Activated B cell treated with CpG ODN at 0.5 μM for 24 hours (primary cell): ENCODE measurements at regions of chr2 and their contacts with region 1.

Region 1: DNA sequence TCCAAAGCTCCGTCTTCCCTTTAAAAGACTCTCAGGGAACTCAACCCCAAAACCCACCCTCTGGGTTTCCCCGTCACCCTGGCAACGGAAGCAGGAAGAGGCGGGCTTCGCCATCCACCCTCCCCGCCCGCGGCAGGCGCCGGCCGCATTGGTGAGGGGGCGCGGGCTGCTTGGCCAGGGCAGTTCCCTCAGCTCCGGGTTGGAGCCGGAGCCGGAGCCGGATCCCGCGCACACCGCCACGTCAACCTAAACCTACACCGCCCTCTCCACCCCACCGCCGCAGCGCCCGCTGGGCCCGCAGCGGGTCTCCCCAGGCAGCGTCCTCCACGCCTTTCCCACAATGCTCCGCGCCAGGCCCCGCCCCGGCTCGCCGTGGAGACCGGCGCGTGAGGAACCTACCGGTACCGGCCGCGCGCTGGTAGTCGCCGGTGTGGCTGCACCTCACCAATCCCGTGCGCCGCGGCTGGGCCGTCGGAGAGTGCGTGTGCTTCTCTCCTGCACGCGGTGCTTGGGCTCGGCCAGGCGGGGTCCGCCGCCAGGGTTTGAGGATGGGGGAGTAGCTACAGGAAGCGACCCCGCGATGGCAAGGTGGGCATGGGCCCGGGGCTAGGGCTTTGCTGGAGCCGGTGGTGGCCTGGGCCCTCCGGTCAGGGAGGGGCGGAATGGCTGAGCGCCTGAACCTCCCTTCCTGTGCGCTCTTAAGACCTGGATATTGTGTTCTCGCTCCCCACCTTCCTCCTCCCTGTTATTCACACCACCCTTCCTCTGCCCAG is at the start of gene DNAJC10:
- DNase-seq: peak; percentile 94
- ATAC-seq: peak; percentile 78
- H3K4me3 Mint-ChIP-seq: no peak within 1 kb of the TSS
- H3K27ac Mint-ChIP-seq: no peak within 1 kb of the TSS
- H3K4me1 Mint-ChIP-seq: peaks cover 12% of the 10 kb centered on the region
- H3K27me3 Mint-ChIP-seq: no peaks in the 10 kb centered on the region
- CTCF ChIP-seq: no peak
- total RNA-seq, gene DNAJC10: 119 and 132 TPM in 2 replicates

Region 2: DNA sequence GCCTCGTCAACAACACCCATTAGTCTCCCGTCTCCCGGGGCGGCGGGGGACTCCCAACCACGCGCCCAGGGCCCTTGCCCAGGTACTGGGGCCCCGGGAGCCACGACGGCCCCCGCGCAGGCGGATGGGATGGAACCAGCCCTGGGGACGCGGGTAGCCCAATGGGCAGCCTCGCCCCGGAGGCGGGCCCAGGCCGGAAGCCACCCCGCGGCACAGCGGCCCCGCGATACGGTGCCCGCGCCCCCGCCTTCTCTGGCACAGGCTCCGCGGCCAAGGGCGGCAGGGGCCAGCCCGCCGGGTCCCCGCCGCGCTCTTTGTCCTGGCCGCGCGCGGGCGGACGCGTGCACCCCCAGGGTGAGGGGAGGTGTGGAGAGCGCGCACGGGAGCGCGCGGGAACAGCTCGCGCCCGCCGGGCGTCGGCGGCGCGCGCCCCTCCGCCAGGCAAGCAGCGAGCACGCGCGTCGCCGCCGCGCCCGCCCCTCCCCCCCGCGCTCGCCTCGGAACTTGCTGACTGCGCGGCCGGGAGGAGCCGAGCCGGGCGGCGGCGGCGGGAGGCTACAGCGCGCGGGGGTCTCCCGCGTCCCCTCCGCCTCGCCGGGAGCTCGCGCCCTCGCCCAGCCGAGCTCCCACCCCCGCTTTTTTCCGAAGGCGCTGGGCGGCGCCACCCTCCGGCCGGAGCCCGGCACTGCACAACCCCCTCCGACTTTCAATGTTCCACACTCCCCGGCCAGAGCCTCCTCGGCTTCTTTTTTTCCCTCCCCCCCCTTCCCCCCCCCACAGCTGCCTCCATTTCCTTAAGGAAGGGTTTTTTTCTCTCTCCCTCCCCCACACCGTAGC is 1735.8 kb before region 1 on chr2 and contains the start of gene UBE2E3:
- CTCF ChIA-PET with region 1: no interaction called
- POLR2A ChIA-PET with region 1: interaction called, 3 read pairs
- intact Hi-C with region 1: loop called (anchors 5 kb)
- DNase-seq: peak; percentile 79
- ATAC-seq: peak; percentile 80
- H3K4me3 Mint-ChIP-seq: peak within 1 kb of the TSS; percentile 93
- H3K27ac Mint-ChIP-seq: peak within 1 kb of the TSS; percentile 95
- H3K4me1 Mint-ChIP-seq: peaks cover 37% of the 10 kb centered on the region
- H3K27me3 Mint-ChIP-seq: no peaks in the 10 kb centered on the region
- CTCF ChIP-seq: no peak
- total RNA-seq, gene UBE2E3: 33.1 and 33.6 TPM in 2 replicates

Region 3: GRCh38 chr2:182606728-182607681 is 109.1 kb before region 1 on chr2:
- CTCF ChIA-PET with region 1: no interaction called
- POLR2A ChIA-PET with region 1: no interaction called
- intact Hi-C with region 1: no loop called
- DNase-seq: no peak
- ATAC-seq: no peak
- H3K4me3 Mint-ChIP-seq: no peak overlapping the region
- H3K27ac Mint-ChIP-seq: no peak overlapping the region
- H3K4me1 Mint-ChIP-seq: peaks cover 5% of the 10 kb centered on the region
- H3K27me3 Mint-ChIP-seq: no peaks in the 10 kb centered on the region
- CTCF ChIP-seq: no peak

Region 4: GRCh38 chr2:182666674-182667314 is 49.3 kb before region 1 on chr2:
- CTCF ChIA-PET with region 1: interaction called, 16 read pairs
- POLR2A ChIA-PET with region 1: interaction called, 12 read pairs
- intact Hi-C with region 1: loop called (anchors 1 kb)
- DNase-seq: no peak
- ATAC-seq: peak; percentile 52
- H3K4me3 Mint-ChIP-seq: no peak overlapping the region
- H3K27ac Mint-ChIP-seq: no peak overlapping the region
- H3K4me1 Mint-ChIP-seq: peaks cover 7% of the 10 kb centered on the region
- H3K27me3 Mint-ChIP-seq: no peaks in the 10 kb centered on the region
- CTCF ChIP-seq: no peak

Region 5: DNA sequence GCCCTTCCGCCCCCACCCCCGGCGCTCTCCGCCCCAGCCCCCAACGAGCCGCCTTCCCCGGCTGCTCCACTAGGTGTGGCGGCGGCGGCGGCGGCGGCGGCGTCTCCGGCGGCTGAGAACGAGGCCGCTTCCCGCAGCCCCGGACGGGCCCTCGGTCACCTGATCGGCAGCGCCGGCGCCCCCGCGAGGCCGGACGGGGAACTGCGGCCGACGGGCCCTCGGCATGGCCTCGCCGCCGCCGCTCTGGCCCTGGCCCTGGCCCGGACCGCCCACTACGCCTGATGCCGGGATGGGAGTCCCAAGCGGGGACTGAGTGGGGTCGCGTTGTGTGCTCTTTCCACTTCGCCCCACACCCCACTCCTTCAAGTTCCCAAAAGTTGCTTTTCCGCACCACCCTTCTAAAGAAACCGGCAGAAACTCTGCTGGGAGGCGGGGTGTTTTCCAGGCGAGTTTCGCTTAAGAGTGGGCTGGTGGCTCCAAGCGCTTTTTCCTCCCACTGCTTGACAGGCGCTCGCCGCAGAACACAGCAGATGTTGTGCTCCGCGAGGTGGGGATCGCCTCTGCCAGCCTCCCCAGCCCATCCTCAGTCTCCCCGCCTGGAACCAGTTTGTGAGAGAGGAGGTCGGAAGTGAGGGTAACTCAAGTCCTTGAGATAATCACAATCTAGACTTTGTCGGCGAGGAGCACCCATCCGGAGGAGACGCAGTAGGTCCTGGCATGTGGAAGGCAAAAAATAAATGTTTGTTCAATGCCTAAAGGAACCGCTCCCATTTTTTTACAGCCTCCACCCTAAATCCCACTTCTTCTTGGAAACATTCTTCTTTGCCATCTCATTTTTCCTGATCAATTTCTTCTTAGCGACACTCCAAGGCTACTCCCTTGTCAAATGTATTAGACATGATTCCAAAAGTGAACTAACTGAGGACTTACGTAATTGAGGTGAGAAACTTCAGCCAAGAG is 322.5 kb after region 1 on chr2 and contains the start of gene NCKAP1:
- CTCF ChIA-PET with region 1: no interaction called
- POLR2A ChIA-PET with region 1: no interaction called
- intact Hi-C with region 1: loop called (anchors 2 kb)
- DNase-seq: peak; percentile 59
- ATAC-seq: peak; percentile 70
- H3K4me3 Mint-ChIP-seq: peak within 1 kb of the TSS; percentile 55
- H3K27ac Mint-ChIP-seq: no peak within 1 kb of the TSS
- H3K4me1 Mint-ChIP-seq: peaks cover 27% of the 10 kb centered on the region
- H3K27me3 Mint-ChIP-seq: peaks cover 41% of the 10 kb centered on the region
- CTCF ChIP-seq: no peak
- total RNA-seq, gene NCKAP1: 0.22 TPM in 1 of 2 replicates, not detected in the other

Region 6: GRCh38 chr2:183124222-183124956 is 408.3 kb after region 1 on chr2 and contains the start of gene NUP35:
- CTCF ChIA-PET with region 1: no interaction called
- POLR2A ChIA-PET with region 1: interaction called, 4 read pairs
- intact Hi-C with region 1: loop called (anchors 1 kb)
- DNase-seq: peak; percentile 70
- ATAC-seq: peak; percentile 96
- H3K4me3 Mint-ChIP-seq: peak within 1 kb of the TSS; percentile 96
- H3K27ac Mint-ChIP-seq: peak within 1 kb of the TSS; percentile 95
- H3K4me1 Mint-ChIP-seq: peaks cover 29% of the 10 kb centered on the region
- H3K27me3 Mint-ChIP-seq: peaks cover 11% of the 10 kb centered on the region
- CTCF ChIP-seq: no peak
- total RNA-seq, gene NUP35: 19.6 and 25.1 TPM in 2 replicates